Activated CD4-positive, alpha-beta memory T cell treated with anti-CD3 and anti-CD28 coated beads, Interleukin-2, amount 10 ng/mL, durations not matched to agents 7 days and 5 days (primary cell): ENCODE measurements at regions of chr12 and their contacts with region 1.

Region 1: GRCh38 chr12:89345830-89346740 is 6.2 kb downstream of the DUSP6 start:
- DNase-seq: peak; percentile 75
- H3K4me3 Mint-ChIP-seq: peak overlapping the region; percentile 98
- H3K27ac Mint-ChIP-seq: peak overlapping the region; percentile 91
- H3K4me1 Mint-ChIP-seq: peaks cover 62% of the 10 kb centered on the region
- H3K27me3 Mint-ChIP-seq: no peaks in the 10 kb centered on the region

Region 2: DNA sequence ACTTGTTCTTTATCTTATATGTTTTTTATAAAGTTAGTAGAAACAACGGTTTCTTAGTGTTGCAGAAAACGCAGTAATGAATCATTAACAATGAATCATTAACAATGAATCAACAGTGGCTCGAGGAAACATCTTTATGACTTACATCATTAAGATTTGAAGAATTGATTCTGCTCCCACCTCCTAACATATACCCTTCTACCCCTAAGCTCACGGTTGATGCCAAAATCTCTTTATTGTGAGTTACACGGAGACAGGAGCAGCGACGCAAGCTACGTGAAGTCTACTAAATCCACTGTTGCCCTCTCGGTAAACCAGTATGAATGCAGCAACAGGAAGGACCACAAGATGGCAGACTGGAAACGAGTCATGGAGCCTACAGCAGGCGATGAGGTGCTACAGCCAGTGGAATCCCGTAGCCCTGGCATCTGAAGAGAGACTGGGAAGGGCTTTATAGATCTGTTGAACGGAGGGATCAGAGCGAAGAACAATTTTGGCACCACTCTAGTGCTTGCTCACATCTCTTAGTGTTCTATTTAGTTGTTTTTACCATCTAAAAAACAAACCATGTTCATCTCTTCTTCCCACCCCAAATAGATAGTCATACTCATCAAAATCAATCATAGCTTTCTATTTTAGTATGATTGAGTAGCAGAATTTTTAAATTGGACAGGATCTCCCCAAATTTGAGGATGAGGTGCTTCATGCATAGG is 326.5 kb before region 1 on chr12:
- CTCF ChIA-PET with region 1: interaction called, 92 read pairs
- POLR2A ChIA-PET with region 1: interaction called, 62 read pairs
- DNase-seq: peak; percentile 85
- H3K4me3 Mint-ChIP-seq: no peak overlapping the region
- H3K27ac Mint-ChIP-seq: no peak overlapping the region
- H3K4me1 Mint-ChIP-seq: peaks cover 26% of the 10 kb centered on the region
- H3K27me3 Mint-ChIP-seq: peaks cover 4% of the 10 kb centered on the region

Region 3: GRCh38 chr12:89051065-89051677 is 294.9 kb before region 1 on chr12:
- CTCF ChIA-PET with region 1: interaction called, 12 read pairs
- POLR2A ChIA-PET with region 1: interaction called, 3 read pairs
- DNase-seq: no peak
- H3K4me3 Mint-ChIP-seq: no peak overlapping the region
- H3K27ac Mint-ChIP-seq: no peak overlapping the region
- H3K4me1 Mint-ChIP-seq: peaks cover 25% of the 10 kb centered on the region
- H3K27me3 Mint-ChIP-seq: no peaks in the 10 kb centered on the region

Region 4: DNA sequence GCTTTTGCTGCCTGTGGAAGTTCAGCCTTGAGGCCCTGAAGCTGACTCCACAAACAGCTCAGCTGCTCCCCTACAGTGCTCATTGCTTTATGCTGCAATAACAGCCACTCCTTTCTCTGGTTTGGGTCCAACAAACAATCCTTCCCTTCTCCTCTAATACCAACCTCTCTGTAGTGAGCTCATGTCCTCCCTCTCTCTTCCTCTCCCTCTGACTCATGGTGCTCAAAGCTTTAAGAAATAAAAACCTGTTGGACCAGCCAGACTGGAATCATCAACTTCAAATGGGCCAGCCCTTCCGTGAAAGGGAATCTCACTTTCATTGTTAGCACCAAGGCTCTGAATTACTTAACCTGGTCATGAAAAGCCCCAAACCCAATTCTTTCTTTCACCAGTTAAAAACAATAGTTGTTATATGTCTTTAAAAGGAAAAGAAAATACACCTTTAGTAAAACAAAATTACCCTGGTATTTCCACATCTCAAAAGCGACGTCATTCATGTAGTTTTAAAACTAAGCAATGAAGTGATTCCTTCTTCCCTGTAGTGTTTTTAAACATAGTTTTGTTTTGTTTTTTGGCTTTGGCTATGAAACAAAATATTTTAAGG is 120.2 kb before region 1 on chr12:
- CTCF ChIA-PET with region 1: interaction called, 5 read pairs
- POLR2A ChIA-PET with region 1: interaction called, 58 read pairs
- DNase-seq: peak; percentile 30
- H3K4me3 Mint-ChIP-seq: peak overlapping the region; percentile 12
- H3K27ac Mint-ChIP-seq: peak overlapping the region; percentile 92
- H3K4me1 Mint-ChIP-seq: peaks cover 73% of the 10 kb centered on the region
- H3K27me3 Mint-ChIP-seq: no peaks in the 10 kb centered on the region

Region 5: GRCh38 chr12:89333564-89334252 is 12.4 kb before region 1 on chr12:
- CTCF ChIA-PET with region 1: interaction called, 8 read pairs
- POLR2A ChIA-PET with region 1: interaction called, 20 read pairs
- DNase-seq: peak; percentile 55
- H3K4me3 Mint-ChIP-seq: peak overlapping the region; percentile 49
- H3K27ac Mint-ChIP-seq: peak overlapping the region; percentile 54
- H3K4me1 Mint-ChIP-seq: peaks cover 29% of the 10 kb centered on the region
- H3K27me3 Mint-ChIP-seq: no peaks in the 10 kb centered on the region

Region 6: DNA sequence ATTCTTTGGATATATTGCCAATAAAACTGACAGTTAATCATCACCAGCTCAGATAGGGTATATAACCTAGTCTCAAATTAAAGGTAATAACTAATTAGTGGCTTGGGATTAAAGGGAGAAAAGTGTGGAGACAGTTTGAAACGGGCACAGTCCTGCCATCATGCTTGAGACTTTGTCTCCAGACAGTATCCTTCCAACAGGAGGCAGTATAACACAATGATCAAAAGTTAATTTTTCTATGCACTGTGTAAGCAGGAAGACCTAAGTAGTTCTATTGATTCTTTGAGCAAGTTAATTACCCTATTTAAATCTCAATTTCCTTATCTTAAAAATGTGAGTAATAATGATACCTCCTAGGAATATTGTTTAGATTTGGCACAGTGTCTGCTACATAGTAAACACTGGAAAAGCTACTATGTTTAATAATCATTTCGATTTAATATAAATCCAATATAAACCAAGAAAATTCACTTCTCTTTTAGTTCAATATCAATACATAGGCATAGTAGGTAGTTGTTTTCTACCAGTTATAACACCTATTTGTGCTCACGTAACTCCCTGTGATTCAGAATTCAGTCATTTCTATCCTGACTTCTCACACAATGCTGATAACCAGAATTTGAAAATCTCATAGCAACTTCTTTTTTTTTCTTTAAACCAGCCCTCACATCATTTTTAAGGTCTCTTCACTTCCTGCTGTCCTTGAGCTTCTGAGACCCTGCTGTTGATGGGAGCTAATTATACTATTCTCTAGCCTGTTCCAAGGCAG is 124.8 kb after region 1 on chr12:
- CTCF ChIA-PET with region 1: interaction called, 11 read pairs
- POLR2A ChIA-PET with region 1: interaction called, 98 read pairs
- DNase-seq: no peak
- H3K4me3 Mint-ChIP-seq: no peak overlapping the region
- H3K27ac Mint-ChIP-seq: peak overlapping the region; percentile 84
- H3K4me1 Mint-ChIP-seq: peaks cover 81% of the 10 kb centered on the region
- H3K27me3 Mint-ChIP-seq: no peaks in the 10 kb centered on the region

Region 7: DNA sequence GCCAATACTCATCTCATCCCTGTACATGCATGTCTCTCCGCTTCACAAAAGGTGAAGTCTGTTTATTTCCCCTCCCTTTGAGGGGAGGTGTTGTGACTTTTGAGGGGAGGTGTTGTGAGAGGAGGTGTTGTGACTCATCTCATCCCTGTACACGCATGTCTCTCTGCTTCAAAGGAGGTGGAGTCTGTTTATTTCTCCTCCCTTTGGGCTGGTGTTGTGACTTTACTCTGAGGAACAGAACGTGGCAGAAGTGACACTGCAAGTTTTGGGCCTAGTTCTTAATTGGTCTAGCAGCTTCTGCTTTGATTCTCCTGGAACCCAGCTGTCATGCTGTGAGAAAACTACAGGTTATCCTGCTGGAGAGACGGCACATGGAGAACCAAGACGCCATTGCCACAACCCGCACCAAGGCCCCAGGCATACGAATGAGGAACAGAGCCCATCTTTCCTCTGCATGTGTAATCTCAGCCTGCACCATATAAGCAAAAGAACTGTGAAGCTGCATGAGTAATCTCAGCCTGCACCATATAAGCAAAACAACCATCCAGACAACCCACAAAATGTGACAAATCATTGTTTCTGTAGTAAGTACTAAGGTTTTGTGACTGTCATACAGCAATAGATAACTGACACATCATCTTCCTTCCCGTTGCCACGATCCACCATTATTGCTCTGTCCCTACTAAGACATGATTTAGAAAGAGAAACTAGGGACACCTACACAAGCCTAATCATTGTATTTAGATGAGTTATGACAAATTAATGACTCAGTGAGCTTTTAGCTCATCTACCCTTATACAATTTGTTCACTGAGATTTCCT is 148.5 kb after region 1 on chr12:
- CTCF ChIA-PET with region 1: no interaction called
- POLR2A ChIA-PET with region 1: no interaction called
- DNase-seq: peak; percentile 45
- H3K4me3 Mint-ChIP-seq: peak overlapping the region; percentile 8
- H3K27ac Mint-ChIP-seq: peak overlapping the region; percentile 92
- H3K4me1 Mint-ChIP-seq: peaks cover 30% of the 10 kb centered on the region
- H3K27me3 Mint-ChIP-seq: no peaks in the 10 kb centered on the region